B cell (primary cell): ENCODE measurements at regions of chr4 and their contacts with region 1.

Region 1: GRCh38 chr4:150078637-150079581 is 664 bp downstream of the DCLK2 start:
- DNase-seq: peak; percentile 79
- ATAC-seq: peak; percentile 63
- H3K4me3 ChIP-seq: peak overlapping the region; percentile 47 to 72 (median 60)
- H3K4me3 Mint-ChIP-seq: peak overlapping the region; percentile 88
- H3K27ac ChIP-seq: no peak overlapping the region
- H3K27ac Mint-ChIP-seq: peak overlapping the region; percentile 57
- H3K4me1 ChIP-seq: peaks cover 18 to 21% of the 10 kb centered on the region in 2 donors
- H3K4me1 Mint-ChIP-seq: peaks cover 15% of the 10 kb centered on the region
- H3K27me3 ChIP-seq: peaks cover 0 to 30% (median 15%) of the 10 kb centered on the region in 4 experiments
- H3K27me3 Mint-ChIP-seq: peaks cover 41% of the 10 kb centered on the region
- CTCF ChIP-seq: peak; percentile 28

Region 2: GRCh38 chr4:150038335-150039076 is 40.4 kb before region 1 on chr4:
- CTCF ChIA-PET with region 1: interaction called, 3 read pairs
- POLR2A ChIA-PET with region 1: no interaction called
- intact Hi-C with region 1: loop called (anchors 5 kb)
- DNase-seq: peak; percentile 77
- ATAC-seq: peak; percentile 80
- H3K4me3 ChIP-seq: no peak overlapping the region
- H3K4me3 Mint-ChIP-seq: peak overlapping the region; percentile 40
- H3K27ac ChIP-seq: peak overlapping the region in 1 of 2 donors; percentile 47
- H3K27ac Mint-ChIP-seq: peak overlapping the region; percentile 43
- H3K4me1 ChIP-seq: peaks cover 28 to 29% of the 10 kb centered on the region in 2 donors
- H3K4me1 Mint-ChIP-seq: peaks cover 36% of the 10 kb centered on the region
- H3K27me3 ChIP-seq: peaks cover 0 to 6% (median 0%) of the 10 kb centered on the region in 4 experiments
- H3K27me3 Mint-ChIP-seq: peaks cover 3% of the 10 kb centered on the region
- CTCF ChIP-seq: no peak

Region 3: DNA sequence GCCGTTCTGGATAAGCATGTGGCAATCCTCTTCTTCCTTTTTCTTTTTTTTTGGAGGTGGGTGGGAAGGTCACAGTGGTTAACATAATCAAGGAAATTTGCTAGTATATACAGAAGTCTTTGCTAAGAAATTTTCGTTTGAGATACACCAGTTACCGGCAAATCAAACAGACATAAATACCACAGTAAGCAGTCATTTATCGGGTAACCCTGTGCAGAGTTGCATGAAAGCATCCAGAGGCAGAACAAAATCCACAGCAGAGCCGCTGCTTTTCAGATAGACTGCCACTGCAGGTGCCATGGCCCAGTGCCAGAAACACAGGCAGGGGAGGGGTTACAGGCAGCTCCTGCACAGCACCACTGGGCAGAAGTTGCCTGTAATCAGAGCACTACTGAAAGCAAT is 324.0 kb after region 1 on chr4:
- CTCF ChIA-PET with region 1: no interaction called
- POLR2A ChIA-PET with region 1: no interaction called
- intact Hi-C with region 1: no loop called
- DNase-seq: peak; percentile 10
- ATAC-seq: no peak
- H3K4me3 ChIP-seq: no peak overlapping the region
- H3K4me3 Mint-ChIP-seq: no peak overlapping the region
- H3K27ac ChIP-seq: no peak overlapping the region
- H3K27ac Mint-ChIP-seq: no peak overlapping the region
- H3K4me1 ChIP-seq: no peaks in the 10 kb centered on the region
- H3K4me1 Mint-ChIP-seq: peaks cover 1% of the 10 kb centered on the region
- H3K27me3 ChIP-seq: no peaks in the 10 kb centered on the region
- H3K27me3 Mint-ChIP-seq: no peaks in the 10 kb centered on the region
- CTCF ChIP-seq: no peak

Region 4: DNA sequence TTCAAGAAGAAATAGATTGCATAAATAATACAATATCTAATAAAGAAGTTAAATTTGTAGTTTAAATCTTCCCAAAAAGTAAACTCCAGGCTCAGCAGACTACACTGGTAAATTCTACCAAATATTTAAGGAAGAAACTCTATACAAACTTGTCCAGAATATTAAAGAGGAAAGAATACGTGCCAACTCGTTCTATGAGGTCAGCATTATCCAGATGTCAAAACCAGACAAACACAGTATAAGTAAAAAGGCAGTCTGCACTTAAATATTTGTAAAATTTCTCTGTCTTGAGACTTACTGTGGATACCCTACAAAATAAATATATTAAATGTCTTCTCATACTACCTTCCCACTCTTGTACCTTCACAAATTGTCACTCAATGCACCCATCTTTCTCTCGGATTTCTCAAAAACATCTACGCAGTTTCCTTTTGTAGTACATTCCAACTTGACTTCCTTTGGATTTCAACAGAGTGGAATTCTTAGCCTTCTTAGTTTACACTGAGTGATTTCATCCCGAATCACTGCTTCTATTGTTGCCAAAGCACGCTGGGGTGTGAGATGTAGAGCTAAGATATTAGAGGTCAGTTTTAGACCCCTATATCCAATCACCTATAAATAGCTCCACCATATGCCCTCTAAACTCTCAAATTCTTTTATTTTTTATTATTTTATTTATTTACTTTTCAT is 431.4 kb after region 1 on chr4:
- CTCF ChIA-PET with region 1: no interaction called
- POLR2A ChIA-PET with region 1: no interaction called
- intact Hi-C with region 1: no loop called
- DNase-seq: no peak
- ATAC-seq: no peak
- H3K4me3 ChIP-seq: no peak overlapping the region
- H3K4me3 Mint-ChIP-seq: no peak overlapping the region
- H3K27ac ChIP-seq: no peak overlapping the region
- H3K27ac Mint-ChIP-seq: no peak overlapping the region
- H3K4me1 ChIP-seq: no peaks in the 10 kb centered on the region
- H3K4me1 Mint-ChIP-seq: no peaks in the 10 kb centered on the region
- H3K27me3 ChIP-seq: no peaks in the 10 kb centered on the region
- H3K27me3 Mint-ChIP-seq: no peaks in the 10 kb centered on the region
- CTCF ChIP-seq: no peak

Region 5: DNA sequence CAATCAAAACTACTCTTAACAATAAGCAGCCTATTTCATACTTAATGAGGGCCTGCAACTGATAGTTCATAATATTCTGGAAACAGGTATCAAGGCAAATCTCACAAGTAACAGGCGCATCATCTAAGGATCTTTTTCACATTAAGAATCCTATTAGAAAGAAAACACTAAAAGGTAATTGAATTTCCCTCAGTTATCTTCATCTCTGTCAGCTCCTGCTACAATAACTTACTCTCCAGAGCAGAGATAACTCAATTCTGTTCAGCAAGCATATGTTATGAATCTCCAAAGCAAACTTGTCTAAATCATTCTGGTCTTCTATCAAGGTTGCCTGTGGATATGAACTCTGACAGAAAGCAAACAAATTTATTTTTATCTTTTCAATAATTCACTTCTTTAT is 629.1 kb after region 1 on chr4:
- CTCF ChIA-PET with region 1: no interaction called
- POLR2A ChIA-PET with region 1: no interaction called
- intact Hi-C with region 1: no loop called
- DNase-seq: no peak
- ATAC-seq: no peak
- H3K4me3 ChIP-seq: no peak overlapping the region
- H3K4me3 Mint-ChIP-seq: no peak overlapping the region
- H3K27ac ChIP-seq: no peak overlapping the region
- H3K27ac Mint-ChIP-seq: no peak overlapping the region
- H3K4me1 ChIP-seq: no peaks in the 10 kb centered on the region
- H3K4me1 Mint-ChIP-seq: no peaks in the 10 kb centered on the region
- H3K27me3 ChIP-seq: no peaks in the 10 kb centered on the region
- H3K27me3 Mint-ChIP-seq: no peaks in the 10 kb centered on the region
- CTCF ChIP-seq: no peak